PC-9 (cell line): ENCODE measurements at regions of chr5 and their contacts with region 1.

Region 1: DNA sequence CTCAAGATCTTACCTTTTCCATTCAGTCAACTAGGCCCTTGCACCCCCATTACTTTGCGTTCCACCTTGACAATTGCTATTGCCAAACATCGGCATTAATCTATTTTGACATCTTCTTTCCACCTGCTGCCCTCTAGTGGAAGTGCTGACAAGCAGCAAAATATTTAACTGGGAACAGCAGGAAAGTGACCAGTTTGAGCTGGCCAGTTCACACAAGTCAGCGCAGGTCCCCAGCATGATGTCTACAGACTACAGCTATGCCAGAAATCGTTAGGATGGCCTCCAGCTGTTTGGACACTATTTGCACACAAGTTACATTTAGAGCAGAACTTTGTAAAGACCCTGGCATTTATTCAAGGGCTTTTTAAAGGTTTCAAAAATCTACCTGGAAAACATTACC is 160.1 kb downstream of the GHR start:
- DNase-seq: peak in 1 of 2 experiments; percentile 47
- H3K4me3 ChIP-seq: no peak overlapping the region
- H3K27ac ChIP-seq: no peak overlapping the region
- H3K4me1 ChIP-seq: no peaks in the 10 kb centered on the region
- H3K27me3 ChIP-seq: peaks cover 27% of the 10 kb centered on the region; the same call in 1 of the 2 replicates
- CTCF ChIP-seq: peak; percentile 95

Region 2: DNA sequence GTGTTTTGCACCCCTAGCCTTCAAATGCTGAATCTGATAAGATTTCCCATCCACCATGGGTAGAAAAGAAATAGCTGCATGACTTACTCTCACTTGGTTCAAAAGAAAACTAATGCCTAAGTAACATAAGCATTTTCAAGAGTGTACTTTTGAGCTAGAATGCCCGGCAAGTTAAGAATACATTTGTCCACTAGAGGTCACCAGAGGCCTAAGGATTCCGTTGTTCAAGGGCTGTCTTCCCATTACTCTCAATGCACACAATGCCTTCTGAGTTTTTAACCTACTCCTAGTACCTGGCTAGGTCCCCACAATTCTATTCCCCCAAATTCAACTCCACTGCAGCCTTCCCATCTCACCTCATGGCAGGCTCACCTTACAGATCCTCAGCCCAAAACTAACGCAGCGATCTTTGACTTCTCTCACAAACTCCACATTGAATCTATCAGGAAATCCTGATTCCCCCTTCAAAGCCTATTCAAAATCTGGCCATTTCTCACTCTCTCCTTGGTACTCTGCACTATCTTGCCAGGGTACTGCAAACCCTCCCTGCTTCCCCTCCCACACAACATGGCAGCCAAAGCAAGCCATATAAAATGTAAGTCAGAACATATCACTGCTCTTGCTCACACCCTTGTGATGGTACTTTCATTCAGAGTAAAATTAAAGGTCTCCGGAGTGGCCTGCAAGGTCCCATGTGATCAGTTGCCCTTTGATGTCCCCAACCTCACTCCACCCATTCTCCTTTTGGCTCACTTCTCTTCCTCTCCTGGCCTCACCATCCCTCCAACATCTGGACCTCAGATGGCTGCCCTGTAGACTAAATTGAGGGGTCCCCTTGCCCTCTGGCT is 726.5 kb before region 1 on chr5:
- CTCF ChIA-PET with region 1: interaction called, 5 read pairs
- POLR2A ChIA-PET with region 1: no interaction called
- intact Hi-C with region 1: loop called (anchors 1 kb)
- DNase-seq: peak; percentile 46 to 66
- H3K4me3 ChIP-seq: no peak overlapping the region
- H3K27ac ChIP-seq: no peak overlapping the region
- H3K4me1 ChIP-seq: no peaks in the 10 kb centered on the region
- H3K27me3 ChIP-seq: no peaks in the 10 kb centered on the region
- CTCF ChIP-seq: peak; percentile 90

Region 3: DNA sequence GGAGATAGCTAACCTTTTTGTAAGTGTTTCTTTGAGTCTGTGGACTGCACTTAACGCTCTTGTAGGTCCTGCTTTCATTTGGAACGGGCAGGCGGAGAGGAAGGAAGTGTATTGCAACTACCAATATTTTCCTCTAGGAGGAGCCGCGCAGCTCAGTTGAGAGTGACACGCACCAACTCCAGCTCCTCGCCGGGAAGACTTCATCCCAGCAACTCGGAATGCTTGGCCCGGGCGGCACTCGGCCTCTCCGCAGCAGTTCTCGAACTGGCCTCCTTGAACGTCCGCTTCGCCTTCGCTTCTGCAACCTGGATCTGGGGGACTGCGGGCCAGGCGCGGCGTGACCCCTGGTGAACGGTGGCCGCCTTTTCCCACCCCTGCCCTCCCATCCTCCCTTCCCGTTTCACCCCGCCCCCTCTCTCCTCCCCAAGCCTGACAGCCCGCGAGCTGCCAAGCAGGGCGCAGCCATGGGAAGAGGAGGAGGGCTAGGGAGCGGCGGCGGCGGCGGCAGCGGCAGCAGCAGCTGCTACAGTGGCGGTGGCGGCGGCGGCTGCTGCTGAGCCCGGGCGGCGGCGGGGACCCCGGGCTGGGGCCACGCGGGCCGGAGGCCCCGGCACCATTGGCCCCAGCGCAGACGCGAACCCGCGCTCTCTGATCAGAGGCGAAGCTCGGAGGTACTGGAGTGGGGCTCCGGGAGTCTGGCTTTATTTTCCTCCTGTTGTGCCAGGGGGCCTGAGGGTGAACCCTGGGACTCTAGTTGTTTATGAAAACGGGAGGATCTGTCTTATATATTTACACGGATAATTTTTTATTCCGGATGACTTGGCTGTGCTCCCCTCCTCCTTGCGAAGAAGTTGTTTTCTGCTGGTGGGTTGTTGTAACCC is 159.8 kb before region 1 on chr5 and contains the start of gene GHR:
- CTCF ChIA-PET with region 1: no interaction called
- POLR2A ChIA-PET with region 1: no interaction called
- intact Hi-C with region 1: loop called (anchors 5 kb)
- DNase-seq: peak in 1 of 2 experiments; percentile 67
- H3K4me3 ChIP-seq: no peak within 1 kb of the TSS
- H3K27ac ChIP-seq: no peak within 1 kb of the TSS
- H3K4me1 ChIP-seq: no peaks in the 10 kb centered on the region
- H3K27me3 ChIP-seq: no peaks in the 10 kb centered on the region
- CTCF ChIP-seq: peak; percentile 30; the same call in 1 of the 2 replicates
- total RNA-seq, gene GHR: not detected in 2 replicates

Region 4: DNA sequence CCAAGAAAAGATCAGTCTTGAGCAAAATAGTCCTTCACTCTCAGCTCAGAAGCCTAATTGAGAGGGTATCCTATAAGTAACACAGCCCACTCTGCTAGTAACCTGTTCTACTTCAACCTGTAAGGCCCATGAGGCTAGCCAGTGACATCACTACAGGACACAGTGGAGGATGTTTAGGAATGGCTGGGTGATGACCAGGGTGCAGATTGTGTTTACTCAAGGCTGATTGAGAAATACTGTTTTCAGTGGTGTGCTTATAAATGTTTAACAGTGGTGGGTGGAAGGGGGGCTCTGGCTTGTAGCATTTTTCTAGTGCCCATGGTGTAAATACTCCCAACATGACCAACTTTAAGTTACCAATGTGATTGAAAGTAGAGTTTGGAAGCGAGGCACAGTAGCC is 13.5 kb after region 1 on chr5:
- CTCF ChIA-PET with region 1: interaction called, 22 read pairs
- POLR2A ChIA-PET with region 1: no interaction called
- intact Hi-C with region 1: no loop called
- DNase-seq: no peak
- H3K4me3 ChIP-seq: no peak overlapping the region
- H3K27ac ChIP-seq: no peak overlapping the region
- H3K4me1 ChIP-seq: no peaks in the 10 kb centered on the region
- H3K27me3 ChIP-seq: no peaks in the 10 kb centered on the region
- CTCF ChIP-seq: no peak

Region 5: GRCh38 chr5:42767491-42768105 is 184.3 kb after region 1 on chr5:
- CTCF ChIA-PET with region 1: interaction called, 5 read pairs
- POLR2A ChIA-PET with region 1: no interaction called
- intact Hi-C with region 1: loop called (anchors 1 kb)
- DNase-seq: no peak
- H3K4me3 ChIP-seq: no peak overlapping the region
- H3K27ac ChIP-seq: no peak overlapping the region
- H3K4me1 ChIP-seq: peaks cover 1% of the 10 kb centered on the region; the same call in 1 of the 2 replicates
- H3K27me3 ChIP-seq: no peaks in the 10 kb centered on the region
- CTCF ChIP-seq: peak; percentile 86